Activated CD4-positive, alpha-beta T cell treated with anti-CD3 and anti-CD28 coated beads for 36 hours (primary cell): ENCODE measurements at regions of chr10 and their contacts with region 1.

Region 1: GRCh38 chr10:71771821-71772617 is 1.3 kb downstream of the VSIR start:
- DNase-seq: peak; percentile 66
- ATAC-seq: no peak
- H3K4me3 Mint-ChIP-seq: peak overlapping the region; percentile 92
- H3K27ac Mint-ChIP-seq: peak overlapping the region; percentile 97
- H3K4me1 Mint-ChIP-seq: peaks cover 72% of the 10 kb centered on the region
- H3K27me3 Mint-ChIP-seq: no peaks in the 10 kb centered on the region

Region 2: DNA sequence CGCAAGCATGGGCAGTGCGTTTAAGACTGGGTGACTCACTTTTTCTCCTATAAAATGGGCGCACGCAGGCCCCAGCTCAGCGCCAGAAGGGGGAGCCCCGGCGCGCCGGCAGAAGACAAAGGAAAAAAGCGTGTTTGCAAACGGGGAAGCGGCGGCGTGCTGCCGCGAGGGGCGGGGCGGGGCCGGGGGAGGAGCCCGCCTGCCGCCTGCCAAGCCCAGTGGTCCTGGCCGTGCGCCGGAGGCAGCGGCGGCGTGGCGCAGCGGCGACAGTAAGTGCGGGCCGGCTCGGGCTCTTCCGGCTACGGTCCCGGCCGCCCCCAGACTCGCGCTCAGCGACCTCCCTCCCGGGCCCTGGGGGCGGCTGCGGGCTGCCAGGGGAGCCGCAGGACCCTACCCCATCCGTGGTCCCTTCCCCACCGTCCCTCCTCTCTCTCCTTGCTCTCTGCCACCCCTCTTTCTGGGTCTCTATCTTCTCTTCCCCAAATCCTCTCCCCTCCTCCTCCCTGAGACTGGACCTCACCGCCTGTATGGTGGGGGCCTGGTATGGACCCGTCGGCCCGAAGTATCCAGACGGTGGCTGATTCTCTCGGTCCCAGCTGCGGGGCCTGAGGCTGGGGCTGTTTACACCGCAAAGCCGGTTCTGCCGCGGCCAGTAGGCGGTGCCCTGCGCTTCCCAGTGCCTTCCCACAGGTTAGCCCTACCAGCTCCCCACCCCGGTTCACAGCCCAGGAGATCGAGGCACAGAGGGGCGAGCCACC is 452.8 kb before region 1 on chr10 and contains the start of gene SLC29A3:
- CTCF ChIA-PET with region 1: no interaction called
- POLR2A ChIA-PET with region 1: no interaction called
- intact Hi-C with region 1: loop called in 1 of 2 experiments (anchors 2 kb)
- DNase-seq: peak; percentile 94
- ATAC-seq: peak; percentile 87
- H3K4me3 Mint-ChIP-seq: peak within 1 kb of the TSS; percentile 85
- H3K27ac Mint-ChIP-seq: peak within 1 kb of the TSS; percentile 77
- H3K4me1 Mint-ChIP-seq: peaks cover 33% of the 10 kb centered on the region
- H3K27me3 Mint-ChIP-seq: no peaks in the 10 kb centered on the region
- total RNA-seq, gene SLC29A3: 2.4 to 2.6 TPM

Region 3: DNA sequence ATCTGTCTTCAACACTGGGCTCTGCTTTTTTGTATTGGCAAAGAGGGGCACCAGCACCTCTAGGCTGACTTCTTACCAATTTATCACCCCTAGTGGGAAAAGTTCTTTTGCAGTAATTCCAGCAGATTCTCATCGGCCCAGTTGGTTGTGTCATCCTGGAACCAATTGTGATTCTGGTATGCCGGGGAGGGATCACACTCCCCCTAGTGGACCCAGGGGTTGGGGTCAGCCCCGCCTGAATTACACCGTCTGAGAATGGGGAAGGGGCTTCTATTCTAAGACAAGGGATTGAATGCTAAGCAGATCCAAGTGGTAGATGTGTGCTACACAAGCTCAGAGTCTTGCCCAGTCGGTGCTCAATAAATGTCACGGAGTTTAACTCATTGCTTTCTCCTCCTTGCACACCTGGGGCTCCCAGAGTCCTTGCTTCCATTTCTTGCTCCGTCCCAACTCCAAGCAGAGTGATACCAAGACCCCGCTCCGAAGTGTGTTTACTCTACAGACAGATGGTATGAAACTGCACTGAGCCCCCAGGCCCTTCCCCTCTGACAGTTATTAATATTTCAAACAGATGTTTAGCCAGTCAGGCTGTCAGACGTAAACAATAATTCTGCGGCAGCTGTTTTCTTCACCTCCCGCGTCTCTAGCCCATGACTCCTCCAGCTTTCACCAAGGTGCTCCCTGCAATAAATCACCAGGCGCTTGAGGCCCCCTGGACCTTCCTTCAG is 124.3 kb before region 1 on chr10:
- CTCF ChIA-PET with region 1: no interaction called
- POLR2A ChIA-PET with region 1: no interaction called
- intact Hi-C with region 1: no loop called
- DNase-seq: no peak
- ATAC-seq: no peak
- H3K4me3 Mint-ChIP-seq: no peak overlapping the region
- H3K27ac Mint-ChIP-seq: no peak overlapping the region
- H3K4me1 Mint-ChIP-seq: no peaks in the 10 kb centered on the region
- H3K27me3 Mint-ChIP-seq: no peaks in the 10 kb centered on the region

Region 4: GRCh38 chr10:71708301-71708703 is 63.7 kb before region 1 on chr10:
- CTCF ChIA-PET with region 1: interaction called, 13 read pairs
- POLR2A ChIA-PET with region 1: interaction called, 4 read pairs
- intact Hi-C with region 1: loop called in 1 of 2 experiments (anchors 1 kb)
- DNase-seq: peak; percentile 83
- ATAC-seq: peak; percentile 77
- H3K4me3 Mint-ChIP-seq: no peak overlapping the region
- H3K27ac Mint-ChIP-seq: no peak overlapping the region
- H3K4me1 Mint-ChIP-seq: peaks cover 30% of the 10 kb centered on the region
- H3K27me3 Mint-ChIP-seq: no peaks in the 10 kb centered on the region

Region 5: GRCh38 chr10:71740069-71740468 is 31.9 kb before region 1 on chr10:
- CTCF ChIA-PET with region 1: interaction called, 9 read pairs
- POLR2A ChIA-PET with region 1: interaction called, 5 read pairs
- intact Hi-C with region 1: loop called in 1 of 2 experiments (anchors 1 kb)
- DNase-seq: no peak
- ATAC-seq: no peak
- H3K4me3 Mint-ChIP-seq: no peak overlapping the region
- H3K27ac Mint-ChIP-seq: peak overlapping the region; percentile 97
- H3K4me1 Mint-ChIP-seq: peaks cover 100% of the 10 kb centered on the region
- H3K27me3 Mint-ChIP-seq: no peaks in the 10 kb centered on the region

Region 6: GRCh38 chr10:71822448-71822763 is 50.4 kb after region 1 on chr10:
- CTCF ChIA-PET with region 1: no interaction called
- POLR2A ChIA-PET with region 1: no interaction called
- intact Hi-C with region 1: no loop called
- DNase-seq: no peak
- ATAC-seq: peak; percentile 79
- H3K4me3 Mint-ChIP-seq: no peak overlapping the region
- H3K27ac Mint-ChIP-seq: peak overlapping the region; percentile 26
- H3K4me1 Mint-ChIP-seq: peaks cover 11% of the 10 kb centered on the region
- H3K27me3 Mint-ChIP-seq: no peaks in the 10 kb centered on the region

Region 7: DNA sequence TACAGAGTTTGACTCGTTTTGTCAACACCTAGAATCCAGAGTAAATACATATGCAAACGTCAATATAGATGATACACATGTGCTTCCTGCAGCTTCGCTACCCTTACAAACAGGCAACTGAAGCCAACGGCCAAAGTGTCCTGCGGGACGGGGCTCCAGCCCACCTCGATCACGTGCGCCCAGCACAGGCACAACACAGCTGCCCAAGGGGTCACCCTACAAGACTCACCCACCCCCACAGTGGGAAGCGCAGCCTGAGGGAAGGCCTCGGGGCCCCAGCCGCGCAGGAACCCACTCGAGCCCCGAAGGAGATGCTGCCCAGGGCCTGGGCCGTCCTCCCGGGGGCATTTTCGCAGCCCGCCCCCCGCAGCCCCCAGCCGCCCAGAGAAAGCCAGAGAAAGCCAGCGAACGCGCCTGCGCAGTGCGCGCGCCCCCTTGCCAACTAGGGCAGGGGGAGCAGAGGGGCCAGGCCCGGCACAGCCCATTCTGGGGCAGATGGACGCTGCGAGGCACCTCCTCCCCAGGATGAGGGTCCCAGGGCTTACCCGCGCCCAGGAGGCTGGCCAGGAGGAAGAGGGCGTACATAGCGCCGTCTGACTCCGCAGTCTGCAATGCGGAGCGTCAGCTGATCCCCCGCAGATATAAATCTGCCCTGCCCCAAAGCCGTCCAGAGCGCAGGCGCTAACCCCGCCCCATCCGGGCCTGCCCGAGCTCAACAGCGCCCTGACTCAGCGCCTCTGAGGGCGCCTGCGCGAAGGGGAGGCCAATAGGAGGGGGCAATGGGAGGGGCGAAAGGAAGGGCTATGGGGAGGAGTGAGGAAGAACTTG is 78.8 kb after region 1 on chr10 and contains the start of gene PSAP:
- CTCF ChIA-PET with region 1: interaction called, 3 read pairs
- POLR2A ChIA-PET with region 1: no interaction called
- intact Hi-C with region 1: loop called (anchors 1 kb)
- DNase-seq: peak; percentile 99
- ATAC-seq: peak; percentile 99
- H3K4me3 Mint-ChIP-seq: peak within 1 kb of the TSS; percentile 90
- H3K27ac Mint-ChIP-seq: peak within 1 kb of the TSS; percentile 72
- H3K4me1 Mint-ChIP-seq: peaks cover 47% of the 10 kb centered on the region
- H3K27me3 Mint-ChIP-seq: no peaks in the 10 kb centered on the region
- total RNA-seq, gene PSAP: 100 to 109 TPM

Region 8: DNA sequence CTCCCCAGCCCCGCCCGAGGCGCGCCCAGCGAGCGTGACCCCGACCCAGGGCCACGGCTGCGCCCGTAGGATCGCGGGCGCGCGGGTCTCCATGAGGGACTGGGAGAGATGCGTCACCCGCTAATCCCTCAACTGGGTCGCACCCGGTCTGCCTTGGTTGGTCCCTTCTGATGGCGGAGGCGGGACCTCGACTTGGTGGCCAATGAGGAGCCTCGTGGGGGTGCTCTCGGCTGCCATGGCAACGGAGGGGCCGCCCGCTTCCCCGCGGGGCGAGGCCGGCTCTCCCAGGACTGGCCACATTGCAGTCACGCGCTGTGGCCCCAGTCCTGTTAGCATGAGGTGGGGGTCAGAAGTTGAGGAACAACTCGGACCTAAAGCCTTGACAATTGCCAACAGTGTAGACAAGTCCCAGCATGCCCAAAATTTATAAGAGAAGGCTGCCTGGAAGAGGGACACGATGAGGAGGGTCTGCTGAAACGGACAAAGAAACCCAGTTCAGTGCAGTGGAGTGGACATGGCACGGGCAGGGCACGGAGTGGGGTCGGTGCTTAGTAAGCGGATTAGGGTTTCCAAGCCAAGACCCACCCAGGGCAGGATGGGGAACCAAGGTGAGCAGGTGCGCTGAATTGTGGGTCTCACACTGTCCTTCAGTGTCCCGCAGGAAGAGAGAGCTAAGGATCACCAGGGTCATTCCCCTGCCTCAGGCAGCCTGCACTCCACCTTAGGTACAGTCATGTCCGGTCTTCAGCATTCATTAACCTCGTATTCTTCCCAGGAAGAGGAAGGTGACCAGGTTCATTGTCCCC is 526.2 kb after region 1 on chr10:
- CTCF ChIA-PET with region 1: no interaction called
- POLR2A ChIA-PET with region 1: interaction called, 6 read pairs
- intact Hi-C with region 1: loop called in 1 of 2 experiments (anchors 10 kb)
- DNase-seq: peak; percentile 98
- ATAC-seq: peak; percentile 72
- H3K4me3 Mint-ChIP-seq: peak overlapping the region; percentile 80
- H3K27ac Mint-ChIP-seq: peak overlapping the region; percentile 99
- H3K4me1 Mint-ChIP-seq: peaks cover 68% of the 10 kb centered on the region
- H3K27me3 Mint-ChIP-seq: no peaks in the 10 kb centered on the region